ENCODE measurements at regions of chr13 and their contacts with region 1.

Region 1: GRCh38 chr13:40549500-40550094 is 116.8 kb downstream of the FOXO1 start:
- DNase-seq: no peak
- ATAC-seq: no peak
- H3K4me3 ChIP-seq: no peak overlapping the region
- H3K4me3 Mint-ChIP-seq: no peak overlapping the region
- H3K27ac ChIP-seq: no peak overlapping the region
- H3K27ac Mint-ChIP-seq: peak overlapping the region; percentile 42
- H3K4me1 ChIP-seq: peaks cover 5% of the 10 kb centered on the region in 2 donors
- H3K4me1 Mint-ChIP-seq: peaks cover 51% of the 10 kb centered on the region
- H3K27me3 ChIP-seq: no peaks in the 10 kb centered on the region
- H3K27me3 Mint-ChIP-seq: no peaks in the 10 kb centered on the region
- CTCF ChIP-seq: no peak

Region 2: DNA sequence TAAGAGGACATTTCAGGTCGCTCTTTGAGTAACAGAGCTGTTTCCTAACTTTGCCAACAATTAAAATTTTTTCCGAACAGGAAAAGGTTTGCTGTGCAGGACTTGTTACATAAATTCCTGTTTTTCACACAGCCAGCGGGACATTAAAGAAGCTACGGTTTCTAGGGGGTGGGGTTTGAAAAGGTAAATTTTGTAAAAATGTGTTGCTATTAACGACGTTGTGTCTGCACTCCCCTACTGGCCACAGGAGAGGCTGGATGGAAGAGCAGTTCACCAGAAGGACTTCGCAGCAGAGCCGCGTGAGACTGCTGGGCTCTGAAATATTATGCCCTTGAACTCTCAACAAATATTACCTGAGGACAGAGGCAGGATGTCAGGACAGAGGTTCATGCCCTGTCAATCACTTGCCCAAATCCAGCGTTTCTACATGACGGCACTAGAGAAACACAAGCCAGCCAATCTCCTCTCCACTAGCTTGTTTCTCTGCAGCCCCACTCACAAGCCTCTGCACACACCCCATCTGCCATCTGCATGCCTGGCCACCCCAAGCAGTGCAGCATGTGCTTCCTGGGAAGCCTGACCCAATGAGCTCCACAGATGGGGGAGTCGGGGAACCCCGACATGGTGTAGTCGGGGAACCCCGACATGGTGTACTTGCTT is 14.9 kb after region 1 on chr13:
- CTCF ChIA-PET with region 1: interaction called, 3 read pairs
- POLR2A ChIA-PET with region 1: interaction called, 3 read pairs
- intact Hi-C with region 1: loop called (anchors 2 kb)
- DNase-seq: peak; percentile 81
- ATAC-seq: peak; percentile 32
- H3K4me3 ChIP-seq: peak overlapping the region in 2 of 5 experiments; percentile 2 to 8
- H3K4me3 Mint-ChIP-seq: peak overlapping the region; percentile 74
- H3K27ac ChIP-seq: peak overlapping the region in 1 of 2 donors; percentile 16
- H3K27ac Mint-ChIP-seq: peak overlapping the region; percentile 39
- H3K4me1 ChIP-seq: peaks cover 70 to 82% of the 10 kb centered on the region in 2 donors
- H3K4me1 Mint-ChIP-seq: peaks cover 85% of the 10 kb centered on the region
- H3K27me3 ChIP-seq: no peaks in the 10 kb centered on the region
- H3K27me3 Mint-ChIP-seq: no peaks in the 10 kb centered on the region
- CTCF ChIP-seq: no peak